ENCODE measurements at regions of chr22 and their contacts with region 1.

Region 1: GRCh38 chr22:27885977-27886842 is 32.8 kb downstream of the PITPNB start:
- DNase-seq: peak; percentile 60
- ATAC-seq: peak; percentile 49
- H3K4me3 ChIP-seq: no peak overlapping the region
- H3K4me3 Mint-ChIP-seq: no peak overlapping the region
- H3K27ac ChIP-seq: no peak overlapping the region
- H3K27ac Mint-ChIP-seq: no peak overlapping the region
- H3K4me1 ChIP-seq: no peaks in the 10 kb centered on the region
- H3K4me1 Mint-ChIP-seq: peaks cover 3% of the 10 kb centered on the region
- H3K27me3 ChIP-seq: no peaks in the 10 kb centered on the region
- H3K27me3 Mint-ChIP-seq: no peaks in the 10 kb centered on the region
- CTCF ChIP-seq: peak; percentile 96

Region 2: DNA sequence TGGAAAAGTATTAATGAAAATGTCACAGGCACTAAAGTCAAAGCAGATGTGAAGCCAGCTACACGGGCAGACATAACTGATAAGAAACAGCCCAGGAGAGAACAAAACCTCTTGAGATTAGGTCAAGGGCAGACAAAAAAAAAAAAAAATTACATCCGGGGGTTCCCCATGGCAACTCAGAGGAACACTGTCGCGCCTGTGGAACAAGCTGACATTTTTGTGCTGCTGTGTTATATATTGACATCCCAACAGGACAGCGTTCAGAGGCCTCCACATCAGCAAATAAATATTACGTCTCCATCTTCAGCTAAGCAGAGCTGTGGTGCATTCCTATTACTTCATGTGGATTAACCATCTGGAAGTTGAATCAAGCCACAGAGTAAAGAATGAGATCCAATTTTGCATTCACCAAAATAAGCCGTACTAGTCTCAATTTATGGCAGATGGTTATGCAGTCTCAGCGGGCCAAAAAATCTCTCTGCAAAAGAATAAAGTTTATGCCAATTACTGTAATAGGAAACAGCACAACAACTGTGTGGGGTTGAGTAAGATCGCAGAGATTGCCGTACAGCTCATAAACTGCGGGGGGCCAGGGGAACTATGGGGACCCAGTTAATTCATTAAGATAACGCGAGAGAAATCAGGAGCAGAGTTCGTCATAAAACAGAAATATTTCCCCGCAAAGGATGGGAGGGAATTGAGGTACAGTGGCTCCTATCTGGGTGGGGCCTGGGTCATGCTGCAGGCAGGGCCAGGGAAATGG is 43.4 kb before region 1 on chr22:
- CTCF ChIA-PET with region 1: no interaction called
- POLR2A ChIA-PET with region 1: no interaction called
- intact Hi-C with region 1: no loop called
- DNase-seq: no peak
- ATAC-seq: no peak
- H3K4me3 ChIP-seq: no peak overlapping the region
- H3K4me3 Mint-ChIP-seq: no peak overlapping the region
- H3K27ac ChIP-seq: no peak overlapping the region
- H3K27ac Mint-ChIP-seq: no peak overlapping the region
- H3K4me1 ChIP-seq: no peaks in the 10 kb centered on the region
- H3K4me1 Mint-ChIP-seq: no peaks in the 10 kb centered on the region
- H3K27me3 ChIP-seq: no peaks in the 10 kb centered on the region
- H3K27me3 Mint-ChIP-seq: no peaks in the 10 kb centered on the region
- CTCF ChIP-seq: no peak

Region 3: DNA sequence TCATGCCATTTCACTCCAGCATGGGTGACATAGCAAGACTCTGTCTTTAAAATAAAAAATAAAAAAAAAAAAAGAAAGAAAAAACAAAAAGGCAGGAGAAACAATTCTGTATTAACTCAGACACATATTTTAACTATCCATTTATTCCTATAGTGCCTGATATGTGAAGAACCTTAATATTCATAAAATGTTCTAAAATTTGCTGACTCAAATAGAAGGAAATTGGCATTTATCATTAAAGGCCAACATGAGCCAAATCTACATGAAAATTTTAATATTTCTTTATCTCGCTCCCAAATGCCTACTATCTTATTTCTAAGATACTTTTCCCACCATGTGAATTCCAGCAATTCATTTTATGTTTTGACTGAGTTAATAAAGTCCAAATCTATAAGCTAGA is 13.9 kb after region 1 on chr22:
- CTCF ChIA-PET with region 1: interaction called, 18 read pairs
- POLR2A ChIA-PET with region 1: no interaction called
- intact Hi-C with region 1: no loop called
- DNase-seq: no peak
- ATAC-seq: no peak
- H3K4me3 ChIP-seq: no peak overlapping the region
- H3K4me3 Mint-ChIP-seq: no peak overlapping the region
- H3K27ac ChIP-seq: no peak overlapping the region
- H3K27ac Mint-ChIP-seq: no peak overlapping the region
- H3K4me1 ChIP-seq: peaks cover 0 to 5% of the 10 kb centered on the region in 2 donors
- H3K4me1 Mint-ChIP-seq: peaks cover 19% of the 10 kb centered on the region
- H3K27me3 ChIP-seq: no peaks in the 10 kb centered on the region
- H3K27me3 Mint-ChIP-seq: no peaks in the 10 kb centered on the region
- CTCF ChIP-seq: no peak

Region 4: DNA sequence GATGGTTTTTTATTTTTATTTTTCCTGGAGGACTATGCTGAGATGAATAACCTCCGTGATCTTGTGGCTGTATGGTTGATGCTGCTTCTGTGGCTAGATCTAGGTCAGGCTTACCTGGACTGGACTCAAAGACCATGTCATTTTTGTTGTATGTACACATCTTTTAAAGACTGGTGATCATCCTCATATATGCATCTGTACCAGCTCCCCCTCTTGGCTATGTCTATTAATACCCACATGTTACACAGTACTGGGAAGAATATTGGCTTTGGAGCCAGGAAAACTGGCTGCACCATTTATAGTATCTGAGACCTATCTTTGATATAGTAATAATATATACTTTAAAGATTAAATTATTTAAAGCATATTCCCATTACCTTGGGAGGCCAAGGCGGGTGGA is 51.2 kb after region 1 on chr22:
- CTCF ChIA-PET with region 1: interaction called, 17 read pairs
- POLR2A ChIA-PET with region 1: no interaction called
- intact Hi-C with region 1: no loop called
- DNase-seq: no peak
- ATAC-seq: no peak
- H3K4me3 ChIP-seq: no peak overlapping the region
- H3K4me3 Mint-ChIP-seq: no peak overlapping the region
- H3K27ac ChIP-seq: no peak overlapping the region
- H3K27ac Mint-ChIP-seq: no peak overlapping the region
- H3K4me1 ChIP-seq: no peaks in the 10 kb centered on the region
- H3K4me1 Mint-ChIP-seq: no peaks in the 10 kb centered on the region
- H3K27me3 ChIP-seq: no peaks in the 10 kb centered on the region
- H3K27me3 Mint-ChIP-seq: no peaks in the 10 kb centered on the region
- CTCF ChIP-seq: no peak

Region 5: GRCh38 chr22:28019881-28020871 is 134.0 kb after region 1 on chr22:
- CTCF ChIA-PET with region 1: interaction called, 15 read pairs
- POLR2A ChIA-PET with region 1: no interaction called
- intact Hi-C with region 1: no loop called
- DNase-seq: peak; percentile 67
- ATAC-seq: peak; percentile 80
- H3K4me3 ChIP-seq: no peak overlapping the region
- H3K4me3 Mint-ChIP-seq: no peak overlapping the region
- H3K27ac ChIP-seq: no peak overlapping the region
- H3K27ac Mint-ChIP-seq: no peak overlapping the region
- H3K4me1 ChIP-seq: no peaks in the 10 kb centered on the region
- H3K4me1 Mint-ChIP-seq: peaks cover 2% of the 10 kb centered on the region
- H3K27me3 ChIP-seq: no peaks in the 10 kb centered on the region
- H3K27me3 Mint-ChIP-seq: no peaks in the 10 kb centered on the region
- CTCF ChIP-seq: peak; percentile 91

Region 6: DNA sequence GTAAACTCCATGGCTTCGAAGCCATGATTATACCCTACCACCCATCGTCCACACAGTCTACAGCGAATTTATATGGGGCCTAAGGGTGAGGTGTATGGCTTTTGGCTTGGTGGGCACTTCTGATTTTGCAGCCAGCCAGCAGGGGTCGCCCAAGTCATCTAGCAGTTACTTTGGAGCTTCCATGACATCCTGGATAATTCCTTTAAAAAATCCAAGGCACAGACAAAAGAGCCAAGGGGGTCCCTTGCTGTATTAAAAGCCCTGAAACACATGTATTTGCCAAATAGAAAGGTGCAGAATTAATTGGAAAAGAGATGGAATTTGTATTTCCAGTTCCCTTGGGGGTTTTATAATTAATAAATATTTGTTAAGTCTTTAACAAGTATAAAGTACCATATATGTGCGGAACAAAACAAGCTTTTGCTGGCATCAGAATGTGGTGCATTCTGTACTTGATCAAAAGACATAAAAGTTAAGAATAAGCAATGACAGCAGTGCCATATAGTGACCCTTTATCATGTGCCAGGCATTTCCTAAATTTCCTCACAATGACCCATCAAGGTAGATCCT is 165.7 kb after region 1 on chr22:
- CTCF ChIA-PET with region 1: no interaction called
- POLR2A ChIA-PET with region 1: no interaction called
- intact Hi-C with region 1: no loop called
- DNase-seq: no peak
- ATAC-seq: no peak
- H3K4me3 ChIP-seq: no peak overlapping the region
- H3K4me3 Mint-ChIP-seq: no peak overlapping the region
- H3K27ac ChIP-seq: no peak overlapping the region
- H3K27ac Mint-ChIP-seq: no peak overlapping the region
- H3K4me1 ChIP-seq: no peaks in the 10 kb centered on the region
- H3K4me1 Mint-ChIP-seq: no peaks in the 10 kb centered on the region
- H3K27me3 ChIP-seq: no peaks in the 10 kb centered on the region
- H3K27me3 Mint-ChIP-seq: peaks cover 2% of the 10 kb centered on the region
- CTCF ChIP-seq: peak; percentile 48